ENCODE measurements at regions of chr15 and their contacts with region 1.

Region 1: GRCh38 chr15:33132722-33133345 is 61.7 kb downstream of the FMN1 start:
- DNase-seq: no peak
- H3K4me3 ChIP-seq: no peak overlapping the region
- H3K27ac ChIP-seq: no peak overlapping the region
- H3K4me1 ChIP-seq: peaks cover 13 to 31% (median 30%) of the 10 kb centered on the region in 4 donors
- H3K27me3 ChIP-seq: no peaks in the 10 kb centered on the region
- CTCF ChIP-seq: peak; percentile 62 to 66 (median 64)
- EP300 ChIP-seq: no peak
- POLR2A ChIP-seq: no peak

Region 2: DNA sequence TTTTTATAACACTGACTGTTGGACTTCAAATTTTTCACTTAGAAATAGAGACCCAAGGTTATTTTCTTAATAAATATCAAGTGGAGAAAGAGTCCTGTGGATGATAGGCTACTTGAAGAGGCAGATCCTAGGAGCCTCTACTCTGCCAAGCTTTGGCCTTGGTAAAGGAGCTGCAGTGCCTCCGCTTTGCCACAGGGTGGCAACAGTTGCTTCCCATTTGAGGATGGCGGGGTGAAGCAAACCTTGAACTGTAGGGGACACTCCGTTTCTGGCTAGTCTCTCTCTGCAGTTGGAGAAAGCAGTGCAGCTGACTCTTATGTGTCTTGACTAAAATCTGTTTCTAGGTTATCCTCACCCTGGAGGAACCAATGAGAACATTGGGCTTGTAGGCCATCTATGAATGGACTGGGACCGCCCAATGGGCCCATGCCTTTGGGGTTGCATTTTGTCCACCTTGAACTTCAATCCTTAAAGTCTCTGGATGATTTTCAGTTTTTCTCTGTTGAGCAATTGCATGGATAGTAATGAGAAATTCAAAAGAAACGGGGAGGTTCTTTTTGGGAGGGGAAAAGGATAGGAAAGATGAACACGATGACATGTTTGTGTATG is 481.5 kb before region 1 on chr15:
- intact Hi-C with region 1: loop called (anchors 10 kb)
- DNase-seq: no peak
- H3K4me3 ChIP-seq: no peak overlapping the region
- H3K27ac ChIP-seq: no peak overlapping the region
- H3K4me1 ChIP-seq: peaks cover 0 to 23% (median 3%) of the 10 kb centered on the region in 4 donors
- H3K27me3 ChIP-seq: no peaks in the 10 kb centered on the region
- CTCF ChIP-seq: peak; percentile 76 to 94 (median 83)
- EP300 ChIP-seq: no peak
- POLR2A ChIP-seq: no peak

Region 3: GRCh38 chr15:33021806-33022389 is 110.9 kb before region 1 on chr15:
- intact Hi-C with region 1: loop called (anchors 2 kb)
- DNase-seq: no peak
- H3K4me3 ChIP-seq: no peak overlapping the region
- H3K27ac ChIP-seq: no peak overlapping the region
- H3K4me1 ChIP-seq: peaks cover 0 to 10% (median 9%) of the 10 kb centered on the region in 4 donors
- H3K27me3 ChIP-seq: no peaks in the 10 kb centered on the region
- CTCF ChIP-seq: peak; percentile 48 to 68 (median 52)
- EP300 ChIP-seq: no peak
- POLR2A ChIP-seq: no peak

Region 4: DNA sequence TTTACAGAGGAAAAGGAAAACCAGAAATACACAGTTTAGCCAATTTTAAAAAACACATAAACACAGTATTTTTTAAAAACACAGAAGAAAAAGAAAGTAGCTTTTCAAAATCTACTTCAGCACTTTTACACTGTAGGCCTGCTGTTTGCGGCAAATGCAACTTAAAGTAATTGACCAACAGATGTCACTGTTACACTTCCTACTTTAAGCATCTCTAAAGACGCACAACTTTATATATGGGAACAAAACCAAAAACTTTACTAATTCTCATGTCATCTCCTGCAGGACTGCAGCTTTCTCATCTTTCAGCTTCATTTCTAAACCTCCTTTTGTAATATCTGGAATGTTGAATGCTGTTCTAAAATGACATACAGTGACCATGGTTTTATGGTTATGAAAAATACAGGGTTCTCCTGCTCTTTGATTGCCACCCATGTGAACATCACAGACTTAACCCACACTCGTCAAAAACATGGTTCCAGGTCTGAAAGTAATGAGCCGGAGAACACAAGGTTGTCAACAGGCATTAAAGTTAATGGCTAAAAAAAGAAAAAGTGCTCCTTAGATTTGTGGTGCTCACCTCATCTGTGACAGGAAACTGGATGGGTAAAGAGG is 46.2 kb before region 1 on chr15:
- intact Hi-C with region 1: loop called (anchors 2 kb)
- DNase-seq: no peak
- H3K4me3 ChIP-seq: no peak overlapping the region
- H3K27ac ChIP-seq: no peak overlapping the region
- H3K4me1 ChIP-seq: peaks cover 0 to 19% (median 16%) of the 10 kb centered on the region in 4 donors
- H3K27me3 ChIP-seq: no peaks in the 10 kb centered on the region
- CTCF ChIP-seq: peak; percentile 47 to 58 (median 55)
- EP300 ChIP-seq: no peak
- POLR2A ChIP-seq: no peak

Region 5: GRCh38 chr15:33218071-33218491 is 85.2 kb after region 1 on chr15:
- intact Hi-C with region 1: no loop called
- DNase-seq: no peak
- H3K4me3 ChIP-seq: no peak overlapping the region
- H3K27ac ChIP-seq: no peak overlapping the region
- H3K4me1 ChIP-seq: no peaks in the 10 kb centered on the region
- H3K27me3 ChIP-seq: no peaks in the 10 kb centered on the region
- CTCF ChIP-seq: no peak
- EP300 ChIP-seq: no peak
- POLR2A ChIP-seq: no peak

Region 6: GRCh38 chr15:33256874-33257273 is 124.0 kb after region 1 on chr15:
- intact Hi-C with region 1: no loop called
- DNase-seq: peak; percentile 64
- H3K4me3 ChIP-seq: no peak overlapping the region
- H3K27ac ChIP-seq: no peak overlapping the region
- H3K4me1 ChIP-seq: no peaks in the 10 kb centered on the region
- H3K27me3 ChIP-seq: peaks cover 0 to 8% (median 0%) of the 10 kb centered on the region in 4 donors
- CTCF ChIP-seq: no peak
- EP300 ChIP-seq: no peak
- POLR2A ChIP-seq: no peak